ENCODE measurements at regions of chr2 and their contacts with region 1.

Region 1: GRCh38 chr2:191218292-191218898 is 26.8 kb upstream of the MYO1B start:
- DNase-seq: peak; percentile 46 to 97
- ATAC-seq: peak; percentile 81 to 87
- H3K4me3 ChIP-seq: no peak overlapping the region
- H3K27ac ChIP-seq: peak overlapping the region; percentile 93 to 95
- H3K4me1 ChIP-seq: peaks cover 56% of the 10 kb centered on the region
- CTCF ChIP-seq: peak; percentile 88
- EP300 ChIP-seq: no peak
- POLR2A ChIP-seq: no peak
- RAD21 ChIP-seq: peak; percentile 88 to 92

Region 2: GRCh38 chr2:190916829-190917228 is 301.6 kb before region 1 on chr2:
- CTCF ChIA-PET with region 1: no interaction called
- POLR2A ChIA-PET with region 1: no interaction called
- DNase-seq: no peak
- ATAC-seq: no peak
- H3K4me3 ChIP-seq: no peak overlapping the region
- H3K27ac ChIP-seq: peak overlapping the region in 1 of 2 experiments; percentile 2; a peak in 1 of 6 replicates
- H3K4me1 ChIP-seq: peaks cover 76% of the 10 kb centered on the region
- CTCF ChIP-seq: no peak
- EP300 ChIP-seq: no peak
- POLR2A ChIP-seq: no peak
- RAD21 ChIP-seq: no peak

Region 3: GRCh38 chr2:190947141-190947540 is 271.3 kb before region 1 on chr2:
- CTCF ChIA-PET with region 1: no interaction called
- POLR2A ChIA-PET with region 1: no interaction called
- DNase-seq: peak in 1 of 2 experiments; percentile 59
- ATAC-seq: peak in 1 of 2 experiments; percentile 23; a peak in 3 of 6 replicates
- H3K4me3 ChIP-seq: no peak overlapping the region
- H3K27ac ChIP-seq: peak overlapping the region; percentile 50 to 73; a peak in 5 of 6 replicates
- H3K4me1 ChIP-seq: peaks cover 58% of the 10 kb centered on the region
- CTCF ChIP-seq: no peak
- EP300 ChIP-seq: no peak
- POLR2A ChIP-seq: no peak
- RAD21 ChIP-seq: no peak

Region 4: DNA sequence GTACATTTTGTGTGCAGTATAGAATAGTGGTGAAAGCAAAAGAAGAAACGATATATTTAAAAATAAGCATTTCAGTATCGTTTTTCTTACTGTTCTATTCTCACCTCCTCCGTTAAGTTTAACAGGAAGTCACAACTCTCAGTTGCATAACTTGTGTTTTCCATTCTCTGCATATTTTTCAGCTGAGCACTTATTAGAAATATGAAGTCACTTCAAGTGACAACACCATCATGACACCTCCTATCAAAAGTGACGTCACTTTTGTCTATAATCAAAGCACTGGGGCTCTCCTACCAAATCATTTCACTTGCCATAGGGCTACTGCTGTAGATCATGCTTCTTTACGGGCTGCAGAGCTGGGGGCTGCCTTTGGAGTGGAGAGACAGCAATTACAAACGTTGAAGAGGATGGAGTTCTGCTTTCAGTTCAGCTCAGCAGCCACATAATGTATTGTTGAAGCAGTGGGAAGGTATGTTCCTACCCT is 104.0 kb before region 1 on chr2:
- CTCF ChIA-PET with region 1: no interaction called
- POLR2A ChIA-PET with region 1: no interaction called
- DNase-seq: peak in 1 of 2 experiments; percentile 4
- ATAC-seq: no peak
- H3K4me3 ChIP-seq: no peak overlapping the region
- H3K27ac ChIP-seq: no peak overlapping the region
- H3K4me1 ChIP-seq: no peaks in the 10 kb centered on the region
- CTCF ChIP-seq: no peak
- EP300 ChIP-seq: no peak
- POLR2A ChIP-seq: no peak
- RAD21 ChIP-seq: no peak

Region 5: DNA sequence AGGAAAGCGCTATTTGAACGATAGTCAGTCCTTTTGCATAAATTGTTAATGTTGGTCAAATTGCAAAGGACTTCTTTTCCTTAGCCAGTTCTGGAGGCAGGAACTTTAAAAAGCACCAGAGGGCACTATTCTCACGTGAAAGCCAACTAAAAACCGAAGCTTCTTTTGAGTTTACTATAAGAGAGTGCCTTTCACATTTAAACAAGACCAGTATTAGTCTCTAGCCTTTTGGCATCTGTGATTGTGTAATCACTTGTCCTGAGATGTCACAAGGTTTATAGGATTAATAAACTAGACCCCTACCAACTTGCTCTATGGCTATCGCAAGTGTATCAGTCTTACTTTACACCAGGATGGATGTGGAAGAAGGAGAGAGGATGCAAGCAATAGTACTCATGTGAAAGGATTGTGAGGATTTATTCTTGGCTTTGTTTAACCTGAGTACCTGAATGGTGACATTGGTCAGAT is 53.2 kb before region 1 on chr2:
- CTCF ChIA-PET with region 1: interaction called, 34 read pairs
- POLR2A ChIA-PET with region 1: interaction called, 8 read pairs
- DNase-seq: peak; percentile 42 to 65
- ATAC-seq: peak; percentile 65 to 81
- H3K4me3 ChIP-seq: no peak overlapping the region
- H3K27ac ChIP-seq: peak overlapping the region; percentile 85 to 95
- H3K4me1 ChIP-seq: peaks cover 51% of the 10 kb centered on the region
- CTCF ChIP-seq: peak; percentile 92
- EP300 ChIP-seq: no peak
- POLR2A ChIP-seq: no peak
- RAD21 ChIP-seq: peak; percentile 95 to 98

Region 6: DNA sequence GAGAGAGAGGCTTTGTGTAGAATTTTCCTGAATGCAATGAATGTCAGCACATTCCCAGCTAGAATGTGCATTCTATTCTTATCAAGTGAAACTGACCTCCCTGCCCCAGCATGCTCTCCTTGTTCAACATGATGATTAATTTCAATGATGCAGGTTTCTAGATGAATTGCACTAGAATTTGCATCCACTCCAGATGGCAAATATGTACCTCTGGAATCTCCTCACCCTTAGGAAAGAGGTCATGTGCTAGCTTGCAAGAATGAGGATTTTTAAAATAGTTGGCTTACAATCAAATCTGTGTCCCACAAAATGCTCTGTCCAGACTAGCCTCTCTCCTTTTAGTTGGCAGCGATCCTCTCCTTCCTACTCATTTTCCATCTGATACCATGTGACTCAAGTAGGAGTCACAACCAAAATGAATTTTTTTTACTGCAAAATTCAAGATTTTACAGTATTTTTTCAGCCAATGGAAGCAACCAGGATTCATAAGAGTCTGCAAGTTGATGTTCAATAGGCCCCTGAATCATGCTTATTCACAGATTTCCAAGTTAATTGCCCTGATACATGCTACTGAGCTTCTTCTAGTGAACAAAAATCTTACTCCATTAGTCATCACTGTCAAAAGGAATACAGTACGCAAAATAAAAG is 46.6 kb before region 1 on chr2:
- CTCF ChIA-PET with region 1: interaction called, 34 read pairs
- POLR2A ChIA-PET with region 1: interaction called, 10 read pairs
- DNase-seq: peak; percentile 37 to 92
- ATAC-seq: peak; percentile 76 to 85
- H3K4me3 ChIP-seq: no peak overlapping the region
- H3K27ac ChIP-seq: peak overlapping the region; percentile 94 to 95
- H3K4me1 ChIP-seq: peaks cover 92% of the 10 kb centered on the region
- CTCF ChIP-seq: no peak
- EP300 ChIP-seq: peak; percentile 82 to 94; a peak in 4 of 5 replicates
- POLR2A ChIP-seq: no peak
- RAD21 ChIP-seq: peak in 1 of 2 experiments; percentile 21; a peak in 3 of 5 replicates

Region 7: GRCh38 chr2:191178806-191179514 is 39.4 kb before region 1 on chr2:
- CTCF ChIA-PET with region 1: interaction called, 34 read pairs
- POLR2A ChIA-PET with region 1: no interaction called
- DNase-seq: peak in 1 of 2 experiments; percentile 66
- ATAC-seq: peak; percentile 56 to 65; a peak in 5 of 6 replicates
- H3K4me3 ChIP-seq: no peak overlapping the region
- H3K27ac ChIP-seq: peak overlapping the region; percentile 68 to 77
- H3K4me1 ChIP-seq: peaks cover 77% of the 10 kb centered on the region
- CTCF ChIP-seq: no peak
- EP300 ChIP-seq: peak; percentile 32 to 70; a peak in 2 of 5 replicates
- POLR2A ChIP-seq: no peak
- RAD21 ChIP-seq: no peak

Region 8: GRCh38 chr2:191206613-191207481 is 11.5 kb before region 1 on chr2:
- CTCF ChIA-PET with region 1: interaction called, 24 read pairs
- POLR2A ChIA-PET with region 1: no interaction called
- DNase-seq: no peak
- ATAC-seq: 0 out of 6 replicates have a peak, but pooled peaks of 1 of the 2 experiments have one; percentile 23
- H3K4me3 ChIP-seq: no peak overlapping the region
- H3K27ac ChIP-seq: no peak overlapping the region
- H3K4me1 ChIP-seq: 0 out of 3 replicates have a peak, but pooled peaks cover 4% of the 10 kb centered on the region
- CTCF ChIP-seq: no peak
- EP300 ChIP-seq: no peak
- POLR2A ChIP-seq: no peak
- RAD21 ChIP-seq: no peak

Region 9: DNA sequence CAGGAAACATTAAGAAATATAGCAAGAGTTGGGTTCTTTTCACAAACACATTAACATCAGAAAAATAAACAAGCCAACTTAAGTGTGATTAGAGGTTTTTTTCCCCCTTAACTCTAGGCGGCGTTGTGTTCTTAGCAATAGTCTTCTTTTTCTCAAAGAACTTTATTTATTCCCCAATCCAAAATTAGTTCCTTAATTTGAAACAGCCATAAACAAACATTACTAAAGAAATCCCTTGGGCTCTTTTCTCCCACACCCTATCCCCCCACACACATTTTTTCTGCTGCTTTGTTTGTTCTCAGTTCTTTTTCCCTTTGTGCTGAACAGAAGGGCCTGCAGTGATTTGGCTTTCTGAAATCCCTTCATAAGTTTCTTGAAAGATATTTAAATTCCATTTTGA is 13.6 kb after region 1 on chr2:
- CTCF ChIA-PET with region 1: interaction called, 16 read pairs
- POLR2A ChIA-PET with region 1: no interaction called
- DNase-seq: no peak
- ATAC-seq: no peak
- H3K4me3 ChIP-seq: no peak overlapping the region
- H3K27ac ChIP-seq: no peak overlapping the region
- H3K4me1 ChIP-seq: no peaks in the 10 kb centered on the region
- CTCF ChIP-seq: peak; percentile 41
- EP300 ChIP-seq: no peak
- POLR2A ChIP-seq: no peak
- RAD21 ChIP-seq: peak; percentile 39 to 53; a peak in 4 of 5 replicates

Region 10: GRCh38 chr2:191245046-191245868 is 26.9 kb after region 1 on chr2 and contains the start of gene MYO1B:
- CTCF ChIA-PET with region 1: interaction called, 25 read pairs
- POLR2A ChIA-PET with region 1: interaction called, 6 read pairs
- DNase-seq: peak; percentile 58 to 89
- ATAC-seq: peak; percentile 83 to 88
- H3K4me3 ChIP-seq: peak within 1 kb of the TSS; percentile 94
- H3K27ac ChIP-seq: peak within 1 kb of the TSS; percentile 89 to 93
- H3K4me1 ChIP-seq: peaks cover 37% of the 10 kb centered on the region
- CTCF ChIP-seq: peak; percentile 75
- EP300 ChIP-seq: no peak
- POLR2A ChIP-seq: peak; percentile 90
- RAD21 ChIP-seq: peak; percentile 66 to 91
- polyA plus RNA-seq, gene MYO1B: 154 and 159 TPM in 2 replicates

Region 11: DNA sequence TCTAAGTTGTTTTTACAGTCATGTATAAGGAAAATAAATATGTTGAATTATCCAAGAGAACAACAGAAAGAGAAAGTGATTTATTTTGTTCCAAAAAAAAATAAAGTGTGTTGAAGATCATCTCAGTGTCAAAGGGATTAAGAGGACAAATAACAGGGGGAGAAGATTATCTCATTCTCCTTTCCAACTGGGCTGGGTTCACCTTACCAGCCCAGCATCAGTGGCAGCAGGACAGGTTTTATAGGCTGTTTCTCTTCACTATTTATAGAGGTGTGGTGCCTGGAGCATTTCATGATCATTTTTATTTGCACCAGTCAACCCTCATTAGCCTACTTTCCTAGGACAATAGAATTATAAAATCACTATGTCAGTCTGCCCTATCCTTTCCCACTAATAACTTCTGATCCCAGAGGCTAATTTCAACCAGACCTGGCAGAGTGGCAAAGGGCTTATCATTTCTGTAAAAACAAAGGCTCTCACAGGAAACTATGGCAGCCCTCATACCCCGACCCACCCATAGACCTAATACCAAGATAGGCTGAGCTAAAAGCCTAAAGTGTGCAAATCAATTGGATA is 1219.8 kb after region 1 on chr2:
- CTCF ChIA-PET with region 1: no interaction called
- POLR2A ChIA-PET with region 1: no interaction called
- DNase-seq: no peak
- ATAC-seq: no peak
- H3K4me3 ChIP-seq: no peak overlapping the region
- H3K27ac ChIP-seq: no peak overlapping the region
- H3K4me1 ChIP-seq: no peaks in the 10 kb centered on the region
- CTCF ChIP-seq: no peak
- EP300 ChIP-seq: no peak
- POLR2A ChIP-seq: no peak
- RAD21 ChIP-seq: no peak